ENCODE measurements at regions of chr14 and their contacts with region 1.

Region 1: DNA sequence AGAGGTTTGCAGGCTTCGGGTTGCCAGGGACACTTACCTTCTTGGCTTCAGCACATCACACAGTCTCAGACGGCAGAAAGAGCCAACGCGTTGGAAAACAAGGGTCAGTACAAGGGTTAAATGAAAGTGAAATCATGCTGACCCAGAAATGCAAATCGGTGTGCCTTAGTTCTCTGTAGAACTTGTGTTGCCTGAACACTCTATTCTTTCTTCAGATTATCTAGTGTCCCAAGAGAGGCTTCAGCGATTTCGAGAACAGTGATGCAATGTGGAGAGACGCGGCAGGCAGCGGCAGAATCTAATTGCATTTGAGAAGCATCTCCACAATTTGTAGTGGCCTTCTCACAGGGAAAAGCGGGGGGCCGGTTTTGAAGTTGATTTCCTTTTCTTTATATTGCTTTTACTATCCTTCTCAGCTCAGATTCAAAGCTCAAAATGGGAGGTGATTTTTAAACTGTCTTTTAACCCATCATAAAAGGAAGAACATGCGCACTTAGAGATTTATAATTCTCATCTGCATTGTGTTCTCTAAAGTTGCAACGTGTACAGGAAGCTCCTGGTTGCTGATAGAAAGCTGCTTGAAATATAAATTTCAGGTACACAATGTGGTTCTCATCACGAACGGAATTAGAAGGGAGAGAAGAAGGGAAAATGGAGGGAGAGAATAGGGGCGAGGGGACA is 67.8 kb upstream of the EGLN3 start:
- H3K4me3 Mint-ChIP-seq: no peak overlapping the region
- H3K27ac Mint-ChIP-seq: no peak overlapping the region
- H3K4me1 Mint-ChIP-seq: peaks cover 23% of the 10 kb centered on the region
- H3K27me3 Mint-ChIP-seq: no peaks in the 10 kb centered on the region

Region 2: DNA sequence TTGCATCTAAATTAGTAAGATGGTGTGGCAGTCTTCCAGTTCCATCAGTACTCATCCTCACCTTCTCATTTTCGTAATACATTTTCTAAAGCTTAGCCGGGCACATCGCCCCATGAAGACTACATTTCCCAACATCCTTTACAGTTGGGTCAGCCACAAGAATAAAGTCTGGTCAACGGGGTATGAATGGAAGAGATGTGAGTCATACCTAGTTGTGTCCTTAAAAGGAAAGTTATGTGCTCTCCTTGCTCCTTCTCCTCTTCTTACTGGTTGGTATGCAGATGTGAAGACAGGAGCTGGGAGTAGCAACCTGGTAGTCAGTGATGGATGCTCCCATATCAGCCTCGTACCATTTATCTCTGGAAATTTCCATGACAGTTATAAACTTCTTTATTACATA is 31.9 kb before region 1 on chr14:
- intact Hi-C with region 1: no loop called
- H3K4me3 Mint-ChIP-seq: no peak overlapping the region
- H3K27ac Mint-ChIP-seq: no peak overlapping the region
- H3K4me1 Mint-ChIP-seq: peaks cover 9% of the 10 kb centered on the region
- H3K27me3 Mint-ChIP-seq: peaks cover 4% of the 10 kb centered on the region

Region 3: DNA sequence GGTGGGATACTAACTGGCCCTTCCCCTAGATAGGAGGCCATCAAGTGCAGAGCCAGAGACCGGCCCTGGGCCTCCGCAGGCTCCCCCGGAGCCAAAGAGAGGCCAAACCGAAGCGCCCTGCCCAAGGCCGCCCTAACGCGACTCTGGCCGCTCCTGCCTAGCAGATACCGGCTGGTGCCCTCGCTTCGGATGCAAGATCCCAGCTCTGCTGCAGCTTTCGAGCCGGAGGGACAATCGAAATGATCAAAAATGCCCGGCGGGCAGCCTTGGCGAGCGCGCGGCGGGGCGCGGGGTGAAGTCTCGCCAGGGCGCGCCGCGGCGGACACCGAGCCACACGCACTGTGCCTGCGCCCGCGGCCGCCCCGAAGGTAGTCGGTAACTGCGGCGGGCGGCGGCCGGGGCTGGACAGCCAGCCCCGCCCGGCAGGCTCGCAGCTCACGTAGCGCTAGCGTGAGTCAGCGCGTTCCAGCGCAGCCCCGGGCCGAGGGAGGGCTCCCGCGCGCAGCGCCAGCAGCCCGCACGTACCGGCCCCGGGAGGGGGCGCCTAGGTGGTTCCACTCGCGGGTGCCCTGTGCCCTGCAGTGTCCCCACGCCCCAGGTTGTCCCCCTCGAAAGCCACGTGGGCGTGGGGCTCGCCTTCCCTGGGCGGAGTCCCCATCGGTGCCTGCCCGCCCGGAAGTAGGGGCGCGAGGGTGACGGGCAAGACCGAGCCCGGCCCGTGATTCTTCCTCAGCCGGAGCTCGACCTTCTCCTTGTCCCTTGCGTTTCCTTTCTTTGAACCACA is 41.3 kb after region 1 on chr14:
- intact Hi-C with region 1: loop called (anchors 10 kb)
- H3K4me3 Mint-ChIP-seq: peak overlapping the region; percentile 76
- H3K27ac Mint-ChIP-seq: peak overlapping the region; percentile 88
- H3K4me1 Mint-ChIP-seq: peaks cover 21% of the 10 kb centered on the region
- H3K27me3 Mint-ChIP-seq: peaks cover 25% of the 10 kb centered on the region

Measured in dendritic cell treated with granulocyte-macrophage colony-stimulating factor and Interleukin-4, amounts not matched to agents 40 ng/mL and 50 ng/mL, for 4 days (primary cell).